ENCODE measurements at regions of chr19 and their contacts with region 1.

Region 1: GRCh38 chr19:43519436-43520088 is 7.4 kb downstream of the ETHE1 start:
- DNase-seq: peak; percentile 88
- H3K27ac ChIP-seq: peak overlapping the region; percentile 35
- CTCF ChIP-seq: peak; percentile 85

Region 2: DNA sequence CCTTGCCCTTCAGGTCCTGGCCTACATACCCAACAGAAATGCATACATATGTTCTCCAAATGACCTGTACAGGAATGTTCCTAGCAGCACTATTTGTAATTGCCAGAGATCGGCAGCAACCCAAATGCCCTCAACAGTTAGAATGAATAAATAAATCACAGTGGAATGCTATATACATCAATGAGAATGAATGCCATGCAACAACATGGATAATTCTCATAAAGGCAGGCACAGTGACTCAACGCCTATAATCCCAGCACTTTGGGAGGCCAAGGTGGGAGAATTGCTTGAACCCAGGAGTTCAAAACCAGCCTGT is 86.2 kb before region 1 on chr19:
- CTCF ChIA-PET with region 1: interaction called, 11 read pairs
- POLR2A ChIA-PET with region 1: no interaction called
- DNase-seq: no peak
- H3K27ac ChIP-seq: no peak overlapping the region
- CTCF ChIP-seq: no peak

Region 3: GRCh38 chr19:43534816-43535761 is 15.5 kb after region 1 on chr19:
- CTCF ChIA-PET with region 1: no interaction called
- POLR2A ChIA-PET with region 1: no interaction called
- DNase-seq: no peak
- H3K27ac ChIP-seq: peak overlapping the region; percentile 98
- CTCF ChIP-seq: no peak

Region 4: GRCh38 chr19:43562698-43563241 is 43.2 kb after region 1 on chr19:
- CTCF ChIA-PET with region 1: no interaction called
- POLR2A ChIA-PET with region 1: no interaction called
- DNase-seq: no peak
- H3K27ac ChIP-seq: peak overlapping the region; percentile 60
- CTCF ChIP-seq: no peak

Region 5: DNA sequence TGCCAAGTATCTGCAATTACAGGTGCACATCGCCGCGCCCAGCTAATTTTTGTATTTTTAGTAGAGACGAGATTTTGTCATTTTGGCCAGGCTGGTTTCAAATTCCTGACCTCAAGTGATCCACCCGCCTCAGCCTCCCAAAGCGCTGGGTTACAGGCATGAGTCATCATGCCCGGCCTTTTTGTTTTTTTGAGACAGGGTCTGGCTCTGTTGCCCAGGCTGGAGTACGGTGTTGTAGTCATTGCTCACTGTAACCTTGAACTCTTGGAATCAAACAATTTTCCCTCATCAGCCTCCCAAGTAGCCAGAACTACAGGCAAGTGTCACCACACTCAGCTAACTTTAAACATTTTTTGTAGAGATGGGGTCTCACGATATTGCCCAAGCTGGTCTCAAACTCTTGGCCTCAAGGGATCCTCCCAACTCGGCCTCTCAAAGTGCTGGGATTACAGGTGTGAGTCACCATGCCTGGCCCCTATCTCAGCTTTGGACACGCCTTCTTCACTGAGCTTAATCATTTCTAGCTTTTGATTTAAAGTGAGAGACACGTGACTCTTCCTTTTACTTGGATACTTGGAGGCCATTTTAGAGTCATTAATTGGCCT is 192.3 kb after region 1 on chr19:
- CTCF ChIA-PET with region 1: no interaction called
- POLR2A ChIA-PET with region 1: no interaction called
- DNase-seq: no peak
- H3K27ac ChIP-seq: no peak overlapping the region
- CTCF ChIP-seq: no peak

Measured in RWPE1 (cell line).